Activated CD4-positive, alpha-beta memory T cell treated with anti-CD3 and anti-CD28 coated beads, Interleukin-2, amount 10 ng/mL, durations not matched to agents 7 days and 5 days (primary cell): ENCODE measurements at regions of chr1 and their contacts with region 1.

Region 1: DNA sequence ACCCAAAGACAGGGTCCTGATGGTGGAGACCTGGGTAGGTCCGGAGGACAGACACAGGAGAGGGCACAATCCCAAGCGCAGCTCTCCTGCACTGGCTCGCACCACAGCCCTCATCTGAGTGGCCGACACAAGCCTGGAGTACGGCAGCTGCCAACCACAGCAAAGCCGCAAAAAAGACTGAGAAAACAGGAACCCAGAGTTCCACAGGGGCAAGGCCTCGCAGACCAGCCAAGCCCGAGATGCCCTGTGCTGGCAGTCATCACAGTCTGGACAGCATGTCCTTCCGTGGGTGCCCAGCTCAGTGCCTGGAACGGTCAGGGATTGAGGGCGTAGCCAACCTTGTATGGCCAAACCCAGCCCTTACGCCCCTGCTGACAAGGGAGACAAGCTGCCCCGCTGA is 11.4 kb downstream of the ZBTB48 start:
- DNase-seq: peak; percentile 28
- H3K4me3 Mint-ChIP-seq: no peak overlapping the region
- H3K27ac Mint-ChIP-seq: peak overlapping the region; percentile 16
- H3K4me1 Mint-ChIP-seq: peaks cover 29% of the 10 kb centered on the region
- H3K27me3 Mint-ChIP-seq: no peaks in the 10 kb centered on the region

Region 2: DNA sequence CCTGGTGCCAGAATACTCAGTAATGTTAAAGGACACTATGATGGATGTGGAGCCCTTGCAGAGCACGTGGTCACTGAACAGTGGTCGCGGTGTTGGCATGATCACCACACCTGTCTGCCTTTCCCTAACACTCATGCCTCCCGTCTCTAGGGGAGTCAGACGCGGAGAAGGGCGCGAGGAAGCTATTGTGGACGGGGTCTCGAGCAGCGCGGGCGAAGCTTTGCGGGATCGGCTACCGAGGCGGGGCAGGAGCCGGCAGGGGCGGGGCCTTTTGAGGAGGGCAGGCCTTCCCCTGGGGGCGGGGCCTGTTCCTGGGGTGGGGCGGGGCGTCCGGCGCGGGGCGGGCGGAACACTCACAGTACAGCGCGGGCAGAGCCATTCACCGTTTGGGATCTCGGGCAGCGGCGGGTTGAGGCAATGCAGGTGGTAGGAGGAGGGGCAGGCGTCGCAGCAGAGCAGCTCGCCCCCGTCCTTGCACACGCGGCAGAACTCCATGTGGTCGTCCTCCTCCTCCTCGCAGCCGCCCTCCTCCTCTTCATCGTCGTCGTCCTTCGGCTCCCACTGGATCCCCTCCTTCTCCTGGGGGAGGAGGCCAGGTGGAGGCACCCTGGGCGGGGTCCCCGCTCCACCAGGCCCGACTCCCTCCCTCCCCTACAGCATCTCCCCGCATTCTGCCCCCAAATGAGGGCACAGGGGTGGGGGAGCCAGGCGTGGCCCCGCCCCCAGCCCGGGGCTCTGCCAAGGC is 442.6 kb before region 1 on chr1:
- CTCF ChIA-PET with region 1: no interaction called
- POLR2A ChIA-PET with region 1: no interaction called
- DNase-seq: peak; percentile 69
- H3K4me3 Mint-ChIP-seq: no peak overlapping the region
- H3K27ac Mint-ChIP-seq: no peak overlapping the region
- H3K4me1 Mint-ChIP-seq: peaks cover 3% of the 10 kb centered on the region
- H3K27me3 Mint-ChIP-seq: peaks cover 3% of the 10 kb centered on the region

Region 3: DNA sequence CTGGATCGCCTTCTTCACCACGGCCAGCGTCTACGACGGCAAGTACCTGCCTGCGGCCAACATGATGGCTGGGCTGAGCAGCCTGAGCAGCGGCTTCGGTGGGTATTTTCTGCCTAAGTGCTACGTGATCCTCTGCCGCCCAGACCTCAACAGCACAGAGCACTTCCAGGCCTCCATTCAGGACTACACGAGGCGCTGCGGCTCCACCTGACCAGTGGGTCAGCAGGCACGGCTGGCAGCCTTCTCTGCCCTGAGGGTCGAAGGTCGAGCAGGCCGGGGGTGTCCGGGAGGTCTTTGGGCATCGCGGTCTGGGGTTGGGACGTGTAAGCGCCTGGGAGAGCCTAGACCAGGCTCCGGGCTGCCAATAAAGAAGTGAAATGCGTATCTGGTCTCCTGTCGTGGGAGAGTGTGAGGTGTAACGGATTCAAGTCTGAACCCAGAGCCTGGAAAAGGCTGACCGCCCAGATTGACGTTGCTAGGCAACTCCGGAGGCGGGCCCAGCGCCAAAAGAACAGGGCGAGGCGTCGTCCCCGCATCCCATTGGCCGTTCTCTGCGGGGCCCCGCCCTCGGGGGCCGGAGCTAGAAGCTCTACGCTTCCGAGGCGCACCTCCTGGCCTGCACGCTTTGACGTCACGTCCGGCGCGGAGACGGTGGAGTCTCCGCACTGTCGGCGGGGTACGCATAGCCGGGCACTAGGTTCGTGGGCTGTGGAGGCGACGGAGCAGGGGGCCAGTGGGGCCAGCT is 11.7 kb before region 1 on chr1 and contains the start of gene ZBTB48:
- CTCF ChIA-PET with region 1: no interaction called
- POLR2A ChIA-PET with region 1: interaction called, 10 read pairs
- DNase-seq: peak; percentile 98
- H3K4me3 Mint-ChIP-seq: peak within 1 kb of the TSS; percentile 83
- H3K27ac Mint-ChIP-seq: peak within 1 kb of the TSS; percentile 85
- H3K4me1 Mint-ChIP-seq: peaks cover 36% of the 10 kb centered on the region
- H3K27me3 Mint-ChIP-seq: no peaks in the 10 kb centered on the region
- total RNA-seq, gene ZBTB48: 33.2 to 42.3 TPM